ENCODE measurements at regions of chr4 and their contacts with region 1.

Region 1: DNA sequence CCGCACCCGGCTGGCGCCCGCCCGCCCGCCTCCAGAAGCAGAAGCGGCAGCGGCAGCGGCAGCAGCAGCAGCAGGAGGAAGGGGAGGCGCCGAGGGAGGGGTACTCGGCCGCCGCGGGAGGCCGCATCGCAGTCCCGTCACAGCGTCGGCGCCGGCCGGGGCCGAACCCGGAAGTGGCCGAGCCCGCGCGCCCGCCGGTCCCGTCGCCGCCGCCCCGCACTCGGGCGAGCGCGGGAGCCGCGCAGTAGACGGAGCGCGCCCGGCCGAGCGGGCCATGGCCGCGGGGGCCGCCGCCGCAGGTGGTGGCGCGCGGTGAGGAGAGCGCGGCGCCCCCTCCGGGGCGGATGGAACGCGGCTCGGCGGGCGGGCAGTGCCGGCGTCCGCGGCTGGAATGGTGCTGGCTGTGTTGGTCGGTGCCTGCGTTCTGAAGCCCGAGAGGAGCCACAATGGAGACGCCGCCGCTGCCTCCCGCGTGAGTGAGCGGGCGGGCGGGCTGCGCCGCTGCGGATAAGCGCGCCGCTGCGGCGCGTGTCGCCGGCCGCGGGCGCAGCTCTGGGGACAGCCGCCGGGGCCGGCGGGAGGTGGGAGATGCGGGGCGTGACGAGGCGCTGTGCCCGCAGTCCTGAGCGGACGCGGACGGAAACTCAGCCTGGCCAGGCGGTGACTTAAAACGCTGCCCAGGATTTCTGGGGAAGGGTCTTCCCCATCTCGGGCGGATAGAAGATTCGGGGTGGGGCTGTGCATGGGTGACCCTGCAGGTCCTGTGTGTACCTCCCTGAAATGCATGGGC is at the start of gene KLHL2:
- DNase-seq: peak; percentile 74
- H3K4me3 Mint-ChIP-seq: peak within 1 kb of the TSS; percentile 88
- H3K27ac Mint-ChIP-seq: peak within 1 kb of the TSS; percentile 86
- H3K4me1 Mint-ChIP-seq: peaks cover 65% of the 10 kb centered on the region
- H3K27me3 Mint-ChIP-seq: no peaks in the 10 kb centered on the region
- total RNA-seq, gene KLHL2: 25.0 to 26.0 TPM

Region 2: DNA sequence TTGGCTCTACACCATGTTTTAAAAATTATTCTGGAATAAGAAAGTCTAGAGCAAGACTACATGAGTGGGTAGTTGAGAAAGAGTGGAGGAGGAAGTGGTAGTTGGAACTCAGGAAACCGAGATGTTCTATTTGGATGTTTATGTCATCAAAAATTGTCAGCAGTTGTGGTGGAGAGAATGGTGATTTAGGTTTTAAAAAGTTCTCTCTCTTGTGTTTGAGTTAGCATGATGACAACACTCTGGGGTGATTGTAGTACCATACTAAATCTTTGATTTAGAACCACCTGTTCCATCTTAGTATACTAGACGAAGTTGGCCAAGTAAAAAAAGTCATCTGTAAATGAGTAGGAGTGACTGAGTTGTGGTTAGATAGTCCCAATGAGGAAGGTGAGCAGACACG is 40.5 kb after region 1 on chr4:
- CTCF ChIA-PET with region 1: no interaction called
- POLR2A ChIA-PET with region 1: no interaction called
- intact Hi-C with region 1: loop called (anchors 2 kb)
- DNase-seq: no peak
- H3K4me3 Mint-ChIP-seq: no peak overlapping the region
- H3K27ac Mint-ChIP-seq: no peak overlapping the region
- H3K4me1 Mint-ChIP-seq: peaks cover 4% of the 10 kb centered on the region
- H3K27me3 Mint-ChIP-seq: no peaks in the 10 kb centered on the region